Mammary epithelial cell (primary cell): ENCODE measurements at regions of chr19 and their contacts with region 1.

Region 1: DNA sequence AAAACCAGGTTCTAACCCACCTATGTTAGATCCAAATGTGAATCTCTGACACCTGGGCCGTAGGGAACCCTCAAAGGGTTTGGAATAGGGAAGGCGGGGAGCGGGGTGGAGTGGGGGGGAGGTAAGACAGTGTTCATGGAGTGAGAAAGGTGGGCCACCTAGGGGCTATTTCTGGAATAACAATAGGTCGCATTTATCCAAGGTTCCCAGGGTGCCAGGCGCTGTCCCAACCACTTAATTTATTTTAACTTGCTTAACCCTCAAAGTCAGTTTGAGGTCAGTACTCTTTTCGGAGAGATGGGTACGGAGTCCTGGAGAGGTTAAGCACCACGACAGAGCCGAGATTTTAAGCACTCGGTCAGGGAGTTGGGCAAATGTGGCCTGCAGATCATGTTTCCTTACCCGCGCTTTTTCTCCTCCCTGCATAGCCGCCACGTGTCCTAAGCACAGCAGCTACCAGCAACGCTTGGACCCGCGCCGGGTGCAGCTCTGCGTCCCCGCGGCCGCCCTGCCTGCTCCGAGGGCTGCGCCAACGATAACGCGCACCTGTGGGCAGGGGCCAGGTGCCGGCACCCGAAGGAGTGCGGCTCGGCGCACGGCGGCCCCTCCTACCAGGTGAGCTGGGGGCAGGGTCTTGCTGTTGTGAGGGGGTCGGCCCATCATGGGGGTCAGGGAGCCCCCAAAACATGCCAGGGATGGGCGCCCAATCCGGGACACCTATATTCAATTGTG is 25.0 kb upstream of the FXYD3 start:
- DNase-seq: peak; percentile 46
- H3K4me3 ChIP-seq: no peak overlapping the region
- H3K27ac ChIP-seq: no peak overlapping the region
- H3K4me1 ChIP-seq: peaks cover 23% of the 10 kb centered on the region
- H3K27me3 ChIP-seq: no peaks in the 10 kb centered on the region
- CTCF ChIP-seq: peak; percentile 43 to 61

Region 2: DNA sequence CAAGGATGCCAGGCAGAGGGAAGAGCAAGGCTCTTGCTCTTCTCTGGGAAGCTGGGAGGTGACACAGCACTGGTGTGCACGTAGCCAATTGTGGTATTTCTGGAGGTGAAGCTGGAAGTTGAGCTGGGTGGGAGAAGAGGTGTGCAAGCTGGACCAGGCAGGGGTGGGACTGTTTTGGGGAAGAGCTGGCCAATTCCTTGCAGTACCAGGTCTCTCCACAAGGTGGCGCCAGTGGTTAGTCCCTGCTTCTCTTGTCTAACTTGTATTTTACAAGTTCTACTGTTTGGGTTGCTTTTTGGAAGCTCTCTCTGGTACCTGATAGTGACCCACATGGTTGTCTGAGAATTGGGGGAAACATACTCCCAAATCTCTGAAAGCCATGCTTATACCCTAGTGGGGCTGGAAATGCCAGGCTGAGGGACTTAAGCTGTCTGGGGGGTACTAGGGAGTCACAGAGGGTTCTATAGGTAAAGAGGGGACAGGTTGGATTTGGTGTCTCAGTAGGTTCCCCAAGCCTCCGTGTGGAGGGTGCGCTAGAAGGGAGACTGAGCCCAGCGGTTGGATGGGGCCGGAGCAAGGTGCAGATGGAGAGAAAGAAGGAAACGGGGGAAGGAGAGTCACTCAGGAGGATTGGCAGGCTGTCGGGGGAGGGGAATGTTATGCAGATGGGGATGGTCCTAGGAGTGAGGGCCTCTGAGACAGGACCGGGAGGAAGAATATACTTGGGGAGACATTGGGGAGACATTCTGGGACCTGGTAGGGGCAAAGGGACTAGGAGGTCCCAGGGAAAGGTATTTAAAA is 46.2 kb before region 1 on chr19:
- CTCF ChIA-PET with region 1: interaction called, 3 read pairs
- dilution Hi-C with region 1: no loop called
- in situ Hi-C with region 1: no loop called
- intact Hi-C with region 1: loop called (anchors 1 kb)
- DNase-seq: peak; percentile 48
- H3K4me3 ChIP-seq: no peak overlapping the region
- H3K27ac ChIP-seq: no peak overlapping the region
- H3K4me1 ChIP-seq: peaks cover 11% of the 10 kb centered on the region
- H3K27me3 ChIP-seq: no peaks in the 10 kb centered on the region
- CTCF ChIP-seq: peak; percentile 93 to 96